Breast epithelium (tissue), 4 donors: ENCODE measurements at regions of chr12 and their contacts with region 1.

Region 1: GRCh38 chr12:103523771-103524170 is 28.0 kb upstream of the C12orf42 start:
- DNase-seq: no peak
- H3K4me3 ChIP-seq: no peak overlapping the region
- H3K27ac ChIP-seq: no peak overlapping the region
- H3K4me1 ChIP-seq: no peaks in the 10 kb centered on the region
- H3K27me3 ChIP-seq: no peaks in the 10 kb centered on the region
- CTCF ChIP-seq: no peak
- POLR2A ChIP-seq: no peak

Region 2: DNA sequence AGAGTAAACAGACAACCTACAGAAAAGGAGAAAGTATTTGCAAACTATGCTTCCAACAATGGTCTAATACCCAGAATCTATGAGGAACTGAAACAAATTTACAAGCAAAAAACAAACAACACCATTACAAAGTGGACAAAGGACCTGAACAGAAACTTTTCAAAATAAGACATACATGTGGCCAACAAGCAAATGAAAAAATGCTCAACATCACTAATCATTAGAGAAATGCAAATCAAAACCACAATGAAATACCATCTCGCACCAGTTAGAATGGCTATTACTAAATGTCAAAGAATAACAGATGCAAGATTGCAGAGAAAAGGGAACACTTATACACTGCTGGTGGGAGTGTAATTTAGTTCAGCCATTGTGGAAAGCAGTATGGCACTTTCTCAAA is 153.8 kb before region 1 on chr12:
- intact Hi-C with region 1: loop called (anchors 5 kb)
- DNase-seq: no peak
- H3K4me3 ChIP-seq: no peak overlapping the region
- H3K27ac ChIP-seq: no peak overlapping the region
- H3K4me1 ChIP-seq: no peaks in the 10 kb centered on the region
- H3K27me3 ChIP-seq: no peaks in the 10 kb centered on the region
- CTCF ChIP-seq: no peak
- POLR2A ChIP-seq: no peak